ENCODE measurements at regions of chr20 and their contacts with region 1.

Region 1: GRCh38 chr20:38645980-38646858 is 44.6 kb downstream of the ARHGAP40 start:
- DNase-seq: peak; percentile 77
- ATAC-seq: peak; percentile 90 to 92

Region 2: GRCh38 chr20:36792422-36792821 is 1853.8 kb before region 1 on chr20:
- intact Hi-C with region 1: no loop called
- DNase-seq: no peak
- ATAC-seq: peak; percentile 40 to 84

Region 3: GRCh38 chr20:38523697-38524096 is 122.5 kb before region 1 on chr20:
- intact Hi-C with region 1: no loop called
- DNase-seq: no peak
- ATAC-seq: no peak

Region 4: DNA sequence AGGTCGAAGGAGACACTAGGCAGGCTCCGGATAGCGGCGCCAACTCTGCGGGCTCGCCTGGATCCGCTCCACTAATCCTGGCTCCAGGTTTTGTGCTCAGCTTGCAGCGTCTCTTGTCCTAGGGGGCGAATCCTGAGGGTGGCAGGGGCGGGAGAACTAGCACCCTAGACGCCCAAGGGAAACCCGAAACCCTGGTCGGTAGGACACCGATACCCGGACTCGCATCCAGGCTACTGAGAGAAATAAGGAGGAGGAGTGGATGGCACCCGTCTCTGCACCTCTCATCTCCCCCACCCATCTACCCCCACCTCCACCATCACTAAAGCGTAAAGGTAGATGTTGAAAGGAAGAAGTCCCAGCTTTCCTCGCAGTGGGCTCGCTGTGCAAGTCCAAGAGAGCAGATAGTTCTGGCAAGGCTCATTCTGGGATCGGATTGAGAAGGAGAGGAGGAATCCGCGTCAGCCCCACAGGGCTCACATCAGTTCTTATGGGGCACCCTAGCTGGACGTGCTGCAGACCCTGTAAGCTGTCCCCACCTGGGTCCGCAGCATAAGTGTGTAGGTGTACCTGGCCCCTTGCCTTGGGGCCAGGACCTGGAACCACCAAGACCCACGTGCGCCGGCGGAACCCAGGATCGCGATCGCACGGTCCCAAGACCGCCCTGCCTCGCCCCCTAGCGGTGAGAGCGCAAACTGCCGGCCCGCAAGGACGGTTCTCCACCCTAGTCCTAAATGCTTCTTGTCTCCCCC is 84.9 kb after region 1 on chr20:
- intact Hi-C with region 1: loop called (anchors 2 to 5 kb)
- DNase-seq: peak; percentile 63
- ATAC-seq: peak; percentile 78 to 85

Region 5: DNA sequence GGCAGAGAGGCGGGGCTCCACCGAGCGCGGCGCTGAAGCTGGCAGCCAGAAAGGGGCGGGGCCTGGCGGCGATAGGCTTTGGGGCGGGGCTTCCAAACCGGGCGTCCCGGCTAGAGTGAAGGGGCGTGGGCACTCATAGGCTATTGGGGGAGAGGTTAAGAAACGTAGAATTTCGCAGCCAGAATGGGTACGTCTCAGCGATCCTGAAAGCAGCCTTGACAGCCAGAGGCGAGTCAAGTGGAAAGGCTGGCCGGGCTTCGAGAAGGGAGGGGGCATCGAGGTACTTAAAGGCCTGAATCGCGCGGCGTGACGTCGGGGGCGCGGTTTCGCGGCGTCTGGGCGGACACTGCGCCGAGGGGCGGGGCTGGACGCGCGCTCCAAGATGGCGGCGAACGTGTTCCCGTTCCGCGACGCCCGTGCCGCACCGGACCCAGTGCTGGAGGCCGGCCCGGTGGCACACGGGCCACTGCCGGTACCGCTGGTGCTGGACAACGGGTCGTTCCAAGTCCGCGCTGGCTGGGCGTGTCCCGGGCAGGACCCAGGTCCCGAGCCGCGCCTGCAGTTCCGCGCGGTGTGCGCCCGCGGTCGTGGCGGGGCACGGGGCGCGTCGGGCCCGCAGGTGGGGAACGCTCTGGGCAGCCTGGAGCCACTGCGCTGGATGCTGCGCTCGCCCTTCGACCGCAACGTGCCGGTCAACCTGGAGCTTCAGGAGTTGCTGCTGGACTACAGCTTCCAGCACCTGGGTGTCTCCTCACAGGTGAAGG is 102.1 kb after region 1 on chr20 and contains the start of gene ACTR5:
- intact Hi-C with region 1: loop called (anchors 5 kb)
- DNase-seq: peak; percentile 93
- ATAC-seq: peak; percentile 98 to 99
- total RNA-seq, gene ACTR5: 3.6 to 5.1 TPM

Region 6: GRCh38 chr20:38893565-38894090 is 247.4 kb after region 1 on chr20:
- intact Hi-C with region 1: loop called in 1 of 2 experiments (anchors 2 kb)
- DNase-seq: peak; percentile 60
- ATAC-seq: peak; percentile 84 to 92